Activated CD4-positive, alpha-beta memory T cell treated with anti-CD3 and anti-CD28 coated beads for 36 hours (primary cell): ENCODE measurements at regions of chr1 and their contacts with region 1.

Region 1: DNA sequence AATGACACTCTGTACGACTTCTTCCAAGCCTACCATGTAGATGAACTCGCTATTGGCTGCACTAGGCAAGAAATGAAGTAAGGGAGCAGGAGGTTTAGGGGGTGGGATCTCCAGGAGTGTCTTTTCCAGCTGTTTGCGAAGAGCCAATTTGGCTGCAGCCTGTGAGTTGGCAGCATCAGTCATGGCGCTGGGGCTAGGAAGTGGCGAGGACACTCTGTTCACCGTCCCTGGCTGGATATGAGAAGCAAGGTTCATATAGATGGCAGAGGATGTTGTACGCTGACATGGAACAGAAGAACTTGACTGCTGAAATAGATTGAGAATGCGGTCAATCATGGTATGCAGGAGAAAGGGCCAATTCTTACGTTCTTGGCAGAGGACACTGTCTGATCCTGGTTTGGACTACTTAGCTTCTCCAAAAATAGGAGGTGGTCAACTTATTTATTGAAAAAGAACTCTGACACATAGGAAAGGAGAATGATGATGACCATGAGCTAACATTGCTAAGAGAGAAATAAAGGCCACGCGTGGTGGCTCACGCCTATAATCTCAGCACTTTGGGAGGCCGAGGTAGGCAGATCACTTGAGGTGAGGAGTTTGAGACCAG is 41.2 kb downstream of the SLC27A3 start:
- DNase-seq: no peak
- H3K4me3 Mint-ChIP-seq: no peak overlapping the region
- H3K27ac Mint-ChIP-seq: no peak overlapping the region
- H3K4me1 Mint-ChIP-seq: no peaks in the 10 kb centered on the region
- H3K27me3 Mint-ChIP-seq: no peaks in the 10 kb centered on the region

Region 2: GRCh38 chr1:153796791-153797659 is 19.4 kb before region 1 on chr1:
- CTCF ChIA-PET with region 1: interaction called, 12 read pairs
- POLR2A ChIA-PET with region 1: no interaction called
- intact Hi-C with region 1: loop called (anchors 1 kb)
- DNase-seq: peak; percentile 89
- H3K4me3 Mint-ChIP-seq: no peak overlapping the region
- H3K27ac Mint-ChIP-seq: no peak overlapping the region
- H3K4me1 Mint-ChIP-seq: peaks cover 3% of the 10 kb centered on the region
- H3K27me3 Mint-ChIP-seq: peaks cover 1% of the 10 kb centered on the region